Breast epithelium (tissue), 4 donors: ENCODE measurements at regions of chrX and their contacts with region 1.

Region 1: DNA sequence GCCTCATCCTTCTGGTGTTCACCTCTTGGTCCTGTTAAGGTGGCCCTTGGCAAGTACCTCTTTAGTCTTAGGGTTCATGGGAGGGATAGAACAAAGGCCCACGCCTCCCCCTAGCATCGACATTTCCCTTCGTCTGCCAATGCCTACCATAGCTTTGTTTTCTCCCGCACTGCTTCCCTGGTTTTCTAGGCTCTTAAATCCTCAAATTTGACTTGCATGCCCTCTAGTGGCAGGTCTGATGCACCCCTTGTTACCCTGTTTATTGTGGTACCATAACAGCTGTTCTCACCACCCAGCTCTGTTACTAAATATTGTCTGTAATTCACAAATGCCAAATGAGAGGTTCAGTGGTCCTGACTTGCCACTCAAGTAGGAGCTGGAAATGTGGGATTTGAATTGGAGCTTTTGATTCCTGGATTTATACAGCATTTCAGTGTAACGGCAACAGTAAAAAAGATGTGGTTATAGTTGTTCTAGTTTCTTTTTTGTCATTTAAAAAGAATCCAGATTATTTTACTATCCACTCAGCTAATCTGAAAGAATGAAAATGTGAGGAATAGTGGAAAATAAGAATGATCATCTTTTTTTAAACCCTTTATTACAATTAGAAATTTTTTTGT is 100.1 kb downstream of the REPS2 start:
- DNase-seq: no peak
- H3K4me3 ChIP-seq: no peak overlapping the region
- H3K27ac ChIP-seq: no peak overlapping the region
- H3K4me1 ChIP-seq: no peaks in the 10 kb centered on the region
- H3K27me3 ChIP-seq: peaks cover 0 to 11% of the 10 kb centered on the region in 2 donors
- CTCF ChIP-seq: peak; percentile 54 to 77 (median 59)
- POLR2A ChIP-seq: no peak

Region 2: DNA sequence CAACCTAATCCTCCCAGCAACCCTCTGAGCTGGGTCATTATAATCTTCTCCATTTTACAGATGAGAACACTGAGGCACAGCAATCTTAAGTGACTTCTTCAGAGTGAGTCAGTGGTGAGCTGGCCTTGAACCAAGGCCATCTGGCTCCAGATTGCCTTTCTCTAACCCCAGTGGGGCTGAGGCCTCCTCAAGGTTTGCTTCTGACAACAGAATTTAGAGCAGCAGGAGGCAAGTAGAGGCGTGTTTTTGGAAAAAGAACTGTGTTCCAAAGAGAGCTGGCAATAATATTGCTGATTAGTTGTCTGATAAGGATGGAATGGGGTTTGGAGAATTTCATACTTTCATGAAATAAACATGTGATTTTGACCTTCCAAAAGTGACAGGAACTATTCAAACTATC is 1594.7 kb before region 1 on chrX:
- intact Hi-C with region 1: loop called (anchors 10 kb)
- DNase-seq: no peak
- H3K4me3 ChIP-seq: no peak overlapping the region
- H3K27ac ChIP-seq: no peak overlapping the region
- H3K4me1 ChIP-seq: no peaks in the 10 kb centered on the region
- H3K27me3 ChIP-seq: peaks cover 0 to 44% of the 10 kb centered on the region in 2 donors
- CTCF ChIP-seq: no peak
- POLR2A ChIP-seq: no peak

Region 3: DNA sequence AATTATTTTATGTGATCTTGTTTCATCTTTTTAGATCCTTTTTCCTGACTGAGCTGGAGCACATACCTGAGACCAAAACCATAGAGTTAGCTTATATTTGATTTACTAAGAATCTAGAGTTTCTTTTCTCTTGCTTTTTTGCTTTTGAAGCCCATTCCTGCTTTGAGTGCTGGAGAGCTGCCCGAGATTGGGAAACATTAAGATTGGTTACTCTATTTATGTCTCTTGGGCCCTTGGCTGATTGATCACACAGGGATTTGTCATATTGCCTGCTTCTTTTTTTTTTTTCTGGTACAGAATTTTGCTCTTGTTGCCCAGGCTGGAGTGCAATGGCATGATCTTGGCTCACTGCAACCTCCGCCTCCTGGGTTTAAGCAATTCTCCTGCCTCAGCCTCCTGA is 26.2 kb before region 1 on chrX:
- intact Hi-C with region 1: no loop called
- DNase-seq: no peak
- H3K4me3 ChIP-seq: no peak overlapping the region
- H3K27ac ChIP-seq: no peak overlapping the region
- H3K4me1 ChIP-seq: no peaks in the 10 kb centered on the region
- H3K27me3 ChIP-seq: peaks cover 0 to 32% of the 10 kb centered on the region in 2 donors
- CTCF ChIP-seq: no peak
- POLR2A ChIP-seq: no peak